Left lung (tissue), 14 donors: ENCODE measurements at regions of chr1 and their contacts with region 1.

Region 1: DNA sequence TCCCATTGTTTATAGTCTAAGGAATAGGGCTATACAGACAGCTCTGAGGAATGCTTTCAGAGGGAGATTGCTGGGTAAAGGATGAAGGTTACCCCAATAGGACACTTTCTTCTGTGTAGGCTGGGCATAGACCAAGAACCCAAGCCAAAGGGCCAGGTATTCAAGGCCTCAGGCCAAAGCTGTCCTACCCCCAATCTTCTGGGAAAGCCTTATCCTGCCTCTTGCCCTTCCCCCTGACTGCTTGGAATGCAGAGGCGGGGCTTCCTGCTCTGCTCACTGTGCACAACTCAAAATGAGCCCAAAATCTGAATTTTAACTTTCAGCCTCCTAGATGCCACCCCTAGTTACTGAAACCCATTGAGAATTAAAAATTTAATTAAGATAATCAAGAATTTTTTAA is 2.2 kb downstream of the OR10Z1 start:
- DNase-seq: no peak
- ATAC-seq: no peak
- H3K4me3 ChIP-seq: no peak overlapping the region
- H3K27ac ChIP-seq: no peak overlapping the region
- H3K4me1 ChIP-seq: no peaks in the 10 kb centered on the region
- H3K27me3 ChIP-seq: no peaks in the 10 kb centered on the region
- CTCF ChIP-seq: no peak

Region 2: GRCh38 chr1:158227904-158228623 is 379.2 kb before region 1 on chr1:
- intact Hi-C with region 1: no loop called
- DNase-seq: peak in 1 of 4 donors; percentile 41
- ATAC-seq: peak; percentile 99
- H3K4me3 ChIP-seq: no peak overlapping the region
- H3K27ac ChIP-seq: no peak overlapping the region
- H3K4me1 ChIP-seq: no peaks in the 10 kb centered on the region
- H3K27me3 ChIP-seq: peaks cover 0 to 13% of the 10 kb centered on the region in 2 donors
- CTCF ChIP-seq: no peak

Region 3: GRCh38 chr1:158666037-158666436 is 58.7 kb after region 1 on chr1:
- intact Hi-C with region 1: loop called in 1 of 2 experiments (anchors 2 kb)
- DNase-seq: no peak
- ATAC-seq: no peak
- H3K4me3 ChIP-seq: no peak overlapping the region
- H3K27ac ChIP-seq: no peak overlapping the region
- H3K4me1 ChIP-seq: no peaks in the 10 kb centered on the region
- H3K27me3 ChIP-seq: no peaks in the 10 kb centered on the region
- CTCF ChIP-seq: no peak

Region 4: GRCh38 chr1:158716335-158716734 is 109.0 kb after region 1 on chr1:
- intact Hi-C with region 1: no loop called
- DNase-seq: no peak
- ATAC-seq: no peak
- H3K4me3 ChIP-seq: no peak overlapping the region
- H3K27ac ChIP-seq: no peak overlapping the region
- H3K4me1 ChIP-seq: no peaks in the 10 kb centered on the region
- H3K27me3 ChIP-seq: no peaks in the 10 kb centered on the region
- CTCF ChIP-seq: no peak